Uterus (tissue), 4 donors: ENCODE measurements at regions of chr20 and their contacts with region 1.

Region 1: DNA sequence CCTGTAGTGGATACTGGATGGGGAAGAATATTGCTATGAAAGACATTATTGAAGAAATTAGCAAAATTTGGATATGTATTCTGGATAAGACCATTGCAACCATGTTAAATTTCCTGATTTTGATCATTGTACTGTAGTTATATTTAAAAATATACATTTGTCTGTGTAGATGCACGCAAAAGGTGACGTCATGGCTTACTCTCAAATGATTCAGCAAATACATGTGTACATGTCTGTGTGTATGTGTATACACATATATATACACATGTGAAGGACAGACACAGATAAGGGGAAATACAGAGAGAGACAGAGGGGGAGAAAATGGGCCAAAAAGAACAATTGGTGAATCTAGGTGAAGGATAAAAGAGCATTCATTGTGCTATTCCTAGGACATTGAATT is 82.3 kb upstream of the PLCB4 start:
- DNase-seq: no peak
- H3K4me3 ChIP-seq: no peak overlapping the region
- H3K27ac ChIP-seq: no peak overlapping the region
- H3K4me1 ChIP-seq: no peaks in the 10 kb centered on the region
- H3K27me3 ChIP-seq: no peaks in the 10 kb centered on the region
- CTCF ChIP-seq: no peak
- POLR2A ChIP-seq: no peak

Region 2: GRCh38 chr20:8782804-8783203 is 203.8 kb before region 1 on chr20:
- intact Hi-C with region 1: no loop called
- DNase-seq: no peak
- H3K4me3 ChIP-seq: no peak overlapping the region
- H3K27ac ChIP-seq: peak overlapping the region; percentile 54 to 66
- H3K4me1 ChIP-seq: no peaks in the 10 kb centered on the region
- H3K27me3 ChIP-seq: no peaks in the 10 kb centered on the region
- CTCF ChIP-seq: no peak
- POLR2A ChIP-seq: no peak

Region 3: DNA sequence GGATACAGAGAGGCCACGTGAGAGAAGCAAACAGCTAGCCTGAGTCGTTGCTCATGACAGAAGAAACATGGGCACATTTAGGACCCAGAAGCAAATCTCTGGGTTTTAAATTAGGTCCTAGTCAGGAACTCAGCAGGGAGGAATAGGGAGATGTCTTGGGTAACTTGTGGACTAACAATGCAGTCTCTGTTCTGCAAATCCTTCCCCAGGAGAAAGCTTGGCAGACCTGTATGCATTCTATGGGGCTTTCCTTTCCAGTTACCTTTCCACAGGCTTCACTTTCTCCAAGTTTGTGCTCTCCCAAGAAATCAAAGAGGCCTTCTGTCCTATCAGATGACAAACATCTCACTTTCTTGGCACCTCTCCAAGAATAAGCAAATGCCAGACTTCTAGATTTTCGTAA is 35.1 kb after region 1 on chr20:
- intact Hi-C with region 1: no loop called
- DNase-seq: no peak
- H3K4me3 ChIP-seq: no peak overlapping the region
- H3K27ac ChIP-seq: no peak overlapping the region
- H3K4me1 ChIP-seq: no peaks in the 10 kb centered on the region
- H3K27me3 ChIP-seq: no peaks in the 10 kb centered on the region
- CTCF ChIP-seq: no peak
- POLR2A ChIP-seq: no peak

Region 4: DNA sequence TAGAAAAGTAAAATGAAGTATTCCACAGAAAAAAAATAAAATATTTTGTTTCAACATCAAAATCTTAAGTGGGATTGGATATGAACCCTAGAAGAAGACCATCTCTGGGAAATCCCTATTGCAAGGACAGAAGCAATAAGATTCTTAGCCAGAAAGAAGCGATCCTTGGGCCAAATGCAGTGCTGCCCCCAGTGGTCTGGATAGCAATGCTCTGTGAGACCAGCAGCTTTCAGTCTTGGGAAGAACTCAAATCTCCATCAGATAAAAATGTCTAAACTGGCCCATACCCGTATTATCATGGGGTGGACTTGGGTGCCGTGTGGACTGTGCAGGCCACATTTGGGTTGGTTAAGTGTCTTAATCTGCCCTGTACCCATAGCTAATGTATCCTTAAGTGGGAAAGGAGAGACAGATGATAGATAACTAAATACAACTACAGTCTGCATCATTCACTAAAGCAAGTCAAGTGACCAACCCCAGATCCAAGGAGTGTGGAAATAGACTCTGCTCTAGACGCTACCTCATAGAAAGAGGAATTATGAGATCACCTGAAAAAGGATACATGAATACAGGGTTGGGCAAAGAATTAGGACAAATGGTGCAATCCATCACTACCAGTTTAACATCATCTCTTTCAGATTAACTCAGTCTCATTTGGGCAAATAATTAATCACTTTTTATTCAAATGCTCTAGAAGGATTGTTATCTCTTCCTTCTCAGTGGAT is 1193.1 kb after region 1 on chr20:
- intact Hi-C with region 1: loop called (anchors 5 kb)
- DNase-seq: no peak
- H3K4me3 ChIP-seq: no peak overlapping the region
- H3K27ac ChIP-seq: peak overlapping the region in 1 of 2 donors; percentile 18
- H3K4me1 ChIP-seq: no peaks in the 10 kb centered on the region
- H3K27me3 ChIP-seq: no peaks in the 10 kb centered on the region
- CTCF ChIP-seq: peak in 1 of 4 experiments; percentile 18
- POLR2A ChIP-seq: no peak